ENCODE measurements at regions of chr19 and their contacts with region 1.

Region 1: DNA sequence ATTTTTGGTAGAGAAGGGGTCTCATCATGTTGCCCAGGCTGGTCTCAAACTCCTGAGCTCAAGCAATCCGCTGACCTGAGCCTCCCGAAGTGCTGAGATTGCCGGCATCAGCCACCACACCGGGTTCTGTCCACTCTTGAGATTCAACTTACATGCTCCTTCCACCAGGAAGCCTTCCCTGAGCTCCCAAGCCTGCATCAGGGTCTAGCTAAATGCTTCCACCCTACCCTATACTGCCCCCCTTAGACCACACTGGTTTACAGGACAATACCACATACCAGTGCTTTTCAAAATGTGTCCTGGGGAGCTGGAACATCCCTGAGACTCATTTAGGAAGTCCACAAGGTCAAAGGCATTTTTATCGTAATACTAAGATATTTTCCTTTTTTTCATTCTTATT is 15.1 kb upstream of the CACNG8 start:
- DNase-seq: no peak
- H3K4me3 ChIP-seq: no peak overlapping the region
- H3K27ac ChIP-seq: no peak overlapping the region
- H3K4me1 ChIP-seq: peaks cover 0 to 14% (median 7%) of the 10 kb centered on the region in 4 experiments; a peak in 4 of 7 replicates
- H3K27me3 ChIP-seq: no peaks in the 10 kb centered on the region
- CTCF ChIP-seq: peak; percentile 32 to 74 (median 67)
- EP300 ChIP-seq: no peak
- POLR2A ChIP-seq: no peak
- RAD21 ChIP-seq: peak; percentile 65 to 74

Region 2: GRCh38 chr19:53849237-53849676 is 98.4 kb before region 1 on chr19:
- CTCF ChIA-PET with region 1: interaction called, 16 read pairs
- POLR2A ChIA-PET with region 1: interaction called, 4 read pairs
- DNase-seq: no peak
- H3K4me3 ChIP-seq: no peak overlapping the region
- H3K27ac ChIP-seq: no peak overlapping the region
- H3K4me1 ChIP-seq: 0 out of 7 replicates have a peak, but pooled peaks cover 0 to 2% (median 0%) of the 10 kb centered on the region in 4 experiments
- H3K27me3 ChIP-seq: no peaks in the 10 kb centered on the region
- CTCF ChIP-seq: no peak
- EP300 ChIP-seq: no peak
- POLR2A ChIP-seq: no peak
- RAD21 ChIP-seq: no peak

Region 3: GRCh38 chr19:53936029-53936428 is 11.6 kb before region 1 on chr19:
- CTCF ChIA-PET with region 1: interaction called, 22 read pairs
- POLR2A ChIA-PET with region 1: interaction called, 4 read pairs
- DNase-seq: no peak
- H3K4me3 ChIP-seq: no peak overlapping the region
- H3K27ac ChIP-seq: no peak overlapping the region
- H3K4me1 ChIP-seq: peaks cover 0 to 4% (median 0%) of the 10 kb centered on the region in 4 experiments; a peak in 1 of 7 replicates
- H3K27me3 ChIP-seq: no peaks in the 10 kb centered on the region
- CTCF ChIP-seq: no peak
- EP300 ChIP-seq: no peak
- POLR2A ChIP-seq: no peak
- RAD21 ChIP-seq: no peak

Region 4: GRCh38 chr19:53971673-53972072 is 24.0 kb after region 1 on chr19:
- CTCF ChIA-PET with region 1: interaction called, 19 read pairs
- POLR2A ChIA-PET with region 1: interaction called, 4 read pairs
- DNase-seq: no peak
- H3K4me3 ChIP-seq: no peak overlapping the region
- H3K27ac ChIP-seq: no peak overlapping the region
- H3K4me1 ChIP-seq: no peaks in the 10 kb centered on the region
- H3K27me3 ChIP-seq: no peaks in the 10 kb centered on the region
- CTCF ChIP-seq: no peak
- EP300 ChIP-seq: no peak
- POLR2A ChIP-seq: no peak
- RAD21 ChIP-seq: no peak

Region 5: GRCh38 chr19:54017261-54017660 is 69.6 kb after region 1 on chr19:
- CTCF ChIA-PET with region 1: interaction called, 33 read pairs
- POLR2A ChIA-PET with region 1: interaction called, 4 read pairs
- DNase-seq: no peak
- H3K4me3 ChIP-seq: no peak overlapping the region
- H3K27ac ChIP-seq: no peak overlapping the region
- H3K4me1 ChIP-seq: peaks cover 0 to 10% (median 2%) of the 10 kb centered on the region in 4 experiments; a peak in 3 of 7 replicates
- H3K27me3 ChIP-seq: no peaks in the 10 kb centered on the region
- CTCF ChIP-seq: no peak
- EP300 ChIP-seq: no peak
- POLR2A ChIP-seq: no peak
- RAD21 ChIP-seq: no peak

Region 6: GRCh38 chr19:54211257-54211656 is 263.6 kb after region 1 on chr19:
- CTCF ChIA-PET with region 1: no interaction called
- POLR2A ChIA-PET with region 1: no interaction called
- DNase-seq: no peak
- H3K4me3 ChIP-seq: no peak overlapping the region
- H3K27ac ChIP-seq: no peak overlapping the region
- H3K4me1 ChIP-seq: peaks cover 0 to 3% (median 2%) of the 10 kb centered on the region in 4 experiments; a peak in 4 of 7 replicates
- H3K27me3 ChIP-seq: no peaks in the 10 kb centered on the region
- CTCF ChIP-seq: no peak
- EP300 ChIP-seq: no peak
- POLR2A ChIP-seq: no peak; a peak in 1 of 3 replicates
- RAD21 ChIP-seq: no peak

Measured in H1 (cell line).